SK-N-SH (cell line): ENCODE measurements at regions of chr9 and their contacts with region 1.

Region 1: GRCh38 chr9:35051069-35051967 is 21.1 kb downstream of the VCP start:
- DNase-seq: peak; percentile 67
- H3K4me3 ChIP-seq: no peak overlapping the region
- H3K27ac ChIP-seq: no peak overlapping the region
- H3K4me1 ChIP-seq: no peaks in the 10 kb centered on the region
- H3K27me3 ChIP-seq: no peaks in the 10 kb centered on the region
- CTCF ChIP-seq: peak; percentile 70
- EP300 ChIP-seq: no peak
- RAD21 ChIP-seq: peak; percentile 57

Region 2: DNA sequence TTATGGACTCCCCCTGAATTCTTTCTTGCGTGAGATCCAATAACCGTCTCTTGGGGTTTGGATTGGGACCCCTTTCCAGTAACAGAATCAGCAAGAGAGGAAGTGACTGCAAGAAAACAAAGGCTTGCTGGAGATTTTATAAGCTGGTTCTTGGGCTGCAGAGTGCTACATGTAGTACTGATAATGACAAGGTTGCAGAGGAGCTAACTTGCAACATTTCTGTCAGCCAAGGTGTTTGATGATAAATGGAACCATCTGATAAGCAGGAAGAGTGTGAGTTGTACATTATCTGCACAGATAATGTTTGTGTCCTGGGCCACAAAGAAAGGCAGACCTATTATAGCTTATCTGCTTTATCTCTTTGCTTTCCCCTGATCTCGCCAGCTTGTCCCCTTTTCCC is 24.6 kb before region 1 on chr9:
- CTCF ChIA-PET with region 1: interaction called, 10 read pairs
- POLR2A ChIA-PET with region 1: no interaction called
- DNase-seq: no peak
- H3K4me3 ChIP-seq: no peak overlapping the region
- H3K27ac ChIP-seq: 0 out of 4 replicates have a peak overlapping the region, but pooled peaks of 1 of the 2 experiments have one; percentile 14
- H3K4me1 ChIP-seq: peaks cover 0 to 6% of the 10 kb centered on the region in 2 experiments; a peak in 1 of 4 replicates
- H3K27me3 ChIP-seq: no peaks in the 10 kb centered on the region
- CTCF ChIP-seq: no peak
- EP300 ChIP-seq: no peak
- RAD21 ChIP-seq: no peak

Region 3: GRCh38 chr9:35646533-35647265 is 595.4 kb after region 1 on chr9:
- CTCF ChIA-PET with region 1: no interaction called
- POLR2A ChIA-PET with region 1: no interaction called
- DNase-seq: peak; percentile 97
- H3K4me3 ChIP-seq: peak overlapping the region; percentile 61 to 67
- H3K27ac ChIP-seq: peak overlapping the region in 1 of 2 experiments; percentile 76; a peak in 1 of 4 replicates
- H3K4me1 ChIP-seq: peaks cover 6 to 7% of the 10 kb centered on the region in 2 experiments; a peak in 2 of 4 replicates
- H3K27me3 ChIP-seq: no peaks in the 10 kb centered on the region
- CTCF ChIP-seq: peak; percentile 74
- EP300 ChIP-seq: no peak
- RAD21 ChIP-seq: peak; percentile 76